SK-N-SH (cell line): ENCODE measurements at regions of chr20 and their contacts with region 1.

Region 1: DNA sequence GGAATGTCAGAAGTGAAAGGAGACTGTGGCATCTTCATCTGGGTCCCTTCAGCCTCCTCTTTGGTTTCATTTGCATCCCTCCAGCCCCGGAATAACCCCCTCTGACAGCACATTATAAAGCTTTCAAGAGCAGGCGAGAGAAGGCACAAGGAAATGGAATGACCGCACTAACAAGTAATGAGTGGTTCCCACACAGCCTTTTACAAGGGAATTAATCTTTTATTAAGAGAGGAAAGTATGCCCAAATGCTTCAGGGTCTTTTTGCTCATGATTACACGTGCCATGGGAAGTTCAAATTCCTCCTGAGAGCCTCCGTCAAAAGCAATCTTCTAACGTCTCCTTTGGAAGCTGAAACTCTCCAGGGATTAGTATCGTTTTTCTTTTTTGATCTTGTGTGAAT is 347.0 kb downstream of the BTBD3 start:
- DNase-seq: no peak
- H3K4me3 ChIP-seq: no peak overlapping the region
- H3K27ac ChIP-seq: no peak overlapping the region
- H3K4me1 ChIP-seq: no peaks in the 10 kb centered on the region
- H3K27me3 ChIP-seq: no peaks in the 10 kb centered on the region
- CTCF ChIP-seq: no peak
- EP300 ChIP-seq: no peak
- RAD21 ChIP-seq: no peak

Region 2: DNA sequence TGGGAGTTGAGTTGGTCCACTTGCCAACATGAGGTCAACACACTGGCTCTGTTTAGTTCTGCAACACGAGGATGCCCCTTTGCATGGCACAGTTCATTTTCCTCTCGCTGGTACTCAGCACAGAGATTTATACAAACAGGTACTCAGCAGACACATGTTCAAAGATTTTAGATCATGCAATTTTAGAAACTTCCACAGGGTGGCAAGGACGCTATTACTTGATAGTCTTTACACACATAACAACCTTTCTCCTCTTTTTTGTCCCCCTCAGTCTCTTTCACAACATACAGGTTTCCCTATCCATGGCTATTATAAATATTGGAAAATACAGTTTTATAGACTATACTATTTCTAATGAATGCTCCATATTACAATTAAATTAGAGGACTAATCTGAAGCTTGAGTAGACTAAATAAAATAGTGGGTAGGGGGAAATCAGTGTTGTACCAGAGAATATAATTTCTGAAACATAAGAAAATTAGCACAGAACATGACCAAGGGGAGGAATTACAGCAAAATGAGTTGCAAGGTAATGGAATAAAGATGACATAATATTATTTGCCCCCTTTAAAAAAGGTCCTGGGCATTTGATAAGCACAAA is 678.9 kb before region 1 on chr20:
- CTCF ChIA-PET with region 1: no interaction called
- POLR2A ChIA-PET with region 1: interaction called, 11 read pairs
- DNase-seq: no peak
- H3K4me3 ChIP-seq: no peak overlapping the region
- H3K27ac ChIP-seq: no peak overlapping the region
- H3K4me1 ChIP-seq: no peaks in the 10 kb centered on the region; a peak in 1 of 4 replicates
- H3K27me3 ChIP-seq: no peaks in the 10 kb centered on the region
- CTCF ChIP-seq: peak; percentile 43
- EP300 ChIP-seq: no peak
- RAD21 ChIP-seq: peak; percentile 54

Region 3: DNA sequence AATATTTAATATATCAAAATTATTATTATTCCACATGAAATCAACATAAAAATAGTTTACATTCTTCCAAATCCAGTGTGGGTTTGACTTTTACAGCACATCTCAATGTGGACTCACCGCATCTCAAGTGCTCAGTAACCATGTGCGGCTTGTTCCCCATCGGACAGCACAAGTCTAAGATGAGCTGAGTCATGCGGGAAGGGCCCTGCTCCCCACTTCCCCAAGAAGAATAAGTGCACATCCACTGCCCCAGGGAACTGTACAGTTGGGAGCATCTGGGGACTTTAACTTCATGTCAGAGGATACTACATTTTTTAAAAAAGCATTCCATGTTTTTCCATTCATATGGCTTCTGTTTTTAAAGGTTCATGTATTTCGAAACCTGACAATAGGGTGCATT is 21.4 kb before region 1 on chr20:
- CTCF ChIA-PET with region 1: no interaction called
- POLR2A ChIA-PET with region 1: no interaction called
- DNase-seq: no peak
- H3K4me3 ChIP-seq: no peak overlapping the region
- H3K27ac ChIP-seq: no peak overlapping the region
- H3K4me1 ChIP-seq: peaks cover 0 to 2% of the 10 kb centered on the region in 2 experiments; a peak in 1 of 4 replicates
- H3K27me3 ChIP-seq: no peaks in the 10 kb centered on the region
- CTCF ChIP-seq: no peak
- EP300 ChIP-seq: no peak
- RAD21 ChIP-seq: no peak

Region 4: GRCh38 chr20:12394786-12395185 is 130.1 kb after region 1 on chr20:
- CTCF ChIA-PET with region 1: no interaction called
- POLR2A ChIA-PET with region 1: no interaction called
- DNase-seq: no peak
- H3K4me3 ChIP-seq: no peak overlapping the region
- H3K27ac ChIP-seq: no peak overlapping the region
- H3K4me1 ChIP-seq: no peaks in the 10 kb centered on the region
- H3K27me3 ChIP-seq: no peaks in the 10 kb centered on the region
- CTCF ChIP-seq: no peak
- EP300 ChIP-seq: no peak
- RAD21 ChIP-seq: no peak